ENCODE measurements at regions of chr2 and their contacts with region 1.

Region 1: GRCh38 chr2:72993147-72993932 is 76.0 kb downstream of the EMX1 start:
- DNase-seq: peak; percentile 19
- H3K4me3 Mint-ChIP-seq: no peak overlapping the region
- H3K27ac Mint-ChIP-seq: no peak overlapping the region
- H3K4me1 Mint-ChIP-seq: no peaks in the 10 kb centered on the region
- H3K27me3 Mint-ChIP-seq: no peaks in the 10 kb centered on the region

Region 2: DNA sequence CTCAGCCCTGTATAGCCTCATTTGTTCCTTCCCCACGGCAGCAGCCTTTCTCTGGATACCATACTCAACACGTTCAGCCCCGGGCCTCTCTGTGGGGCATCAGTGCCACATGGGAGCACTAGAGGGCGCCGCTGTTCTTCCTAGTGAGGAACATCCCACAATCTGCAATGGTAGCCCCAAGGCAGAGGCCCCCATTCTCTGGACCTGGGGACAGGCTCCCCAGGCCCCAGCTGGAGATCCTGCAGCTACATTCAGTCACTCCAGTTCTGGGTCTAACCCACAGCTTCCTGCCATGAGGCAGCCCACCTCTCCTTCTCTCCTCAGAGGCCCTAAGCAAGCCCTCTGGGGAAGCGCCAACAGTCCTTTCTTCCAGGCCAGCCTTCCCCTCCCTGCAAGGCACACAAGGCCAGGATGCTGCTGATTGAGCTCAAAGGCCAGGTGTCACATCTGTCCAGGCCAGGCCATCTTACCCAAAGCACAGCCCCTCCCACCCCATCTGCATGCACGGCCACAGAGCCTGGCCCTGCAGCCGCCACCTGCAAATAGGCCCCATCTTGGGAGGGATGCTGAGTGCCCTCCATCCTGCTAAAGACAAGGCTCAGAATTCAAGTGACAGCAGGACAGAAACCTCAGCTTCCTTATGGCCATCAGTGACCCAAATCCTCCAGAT is 92.5 kb after region 1 on chr2:
- intact Hi-C with region 1: loop called (anchors 5 kb)
- DNase-seq: peak; percentile 69
- H3K4me3 Mint-ChIP-seq: no peak overlapping the region
- H3K27ac Mint-ChIP-seq: no peak overlapping the region
- H3K4me1 Mint-ChIP-seq: no peaks in the 10 kb centered on the region
- H3K27me3 Mint-ChIP-seq: no peaks in the 10 kb centered on the region

Region 3: DNA sequence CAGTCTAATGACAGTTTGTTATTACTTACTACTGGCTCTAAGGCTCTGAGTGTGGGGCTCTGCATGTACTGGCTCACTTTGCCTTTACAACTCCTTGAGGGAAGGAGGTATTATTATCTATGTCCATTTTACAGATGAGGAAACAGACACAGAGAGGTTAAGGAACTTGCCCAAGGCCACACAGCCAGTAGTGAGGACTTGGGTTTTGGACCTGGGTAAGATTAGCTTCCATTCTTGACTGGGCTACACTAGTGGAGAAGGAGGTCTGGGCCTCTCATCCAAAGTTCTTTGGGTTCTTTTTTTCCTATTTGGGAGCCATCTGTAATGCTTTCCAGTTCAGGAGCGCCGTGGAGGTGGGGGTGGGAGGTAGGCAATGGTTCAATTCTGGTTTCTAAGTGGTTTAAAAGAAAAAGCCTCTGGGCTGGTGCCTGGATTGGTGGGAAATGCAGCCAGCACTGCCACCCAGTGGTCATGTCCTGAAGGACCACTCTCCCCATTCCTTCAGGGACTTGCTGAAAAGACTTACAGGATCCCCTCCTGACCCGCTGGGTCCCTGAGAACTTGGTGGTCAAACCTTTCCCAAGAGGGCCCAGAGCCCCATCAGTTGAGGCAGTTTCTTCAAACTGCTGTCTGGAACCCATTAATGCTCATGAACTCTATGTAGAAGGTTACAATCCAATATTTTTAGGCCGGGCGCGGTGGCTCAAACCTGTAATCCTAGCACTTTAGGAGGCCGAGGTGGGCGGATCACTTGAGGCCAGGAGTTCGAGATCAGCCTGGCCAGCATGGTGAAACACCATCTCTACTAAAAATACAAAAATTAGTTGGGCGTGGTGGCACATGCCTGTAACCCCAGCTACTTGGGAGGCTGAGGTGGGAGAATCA is 170.4 kb after region 1 on chr2:
- intact Hi-C with region 1: loop called (anchors 1 kb)
- DNase-seq: peak; percentile 37
- H3K4me3 Mint-ChIP-seq: no peak overlapping the region
- H3K27ac Mint-ChIP-seq: no peak overlapping the region
- H3K4me1 Mint-ChIP-seq: no peaks in the 10 kb centered on the region
- H3K27me3 Mint-ChIP-seq: peaks cover 9% of the 10 kb centered on the region

Measured in activated T-helper 1 cell treated with anti-CD3 and anti-CD28 coated beads, Interleukin-12 subunit alpha, Interleukin-12 subunit beta, Interleukin-2, Interleukin-4 antibody, amounts not matched to agents 30 ng/mL and 10 ng/mL and 1 ng/mL, durations not matched to agents 14 hours and 24 hours and 36 hours (primary cell).